ENCODE measurements at regions of chr22 and their contacts with region 1.

Region 1: GRCh38 chr22:38681784-38682335 is at the start of gene TOMM22:
- DNase-seq: peak; percentile 53
- ATAC-seq: peak; percentile 100
- H3K4me3 ChIP-seq: peak within 1 kb of the TSS; percentile 88
- H3K27ac ChIP-seq: peak within 1 kb of the TSS; percentile 81
- H3K4me1 ChIP-seq: no peaks in the 10 kb centered on the region; the same call in 1 of the 2 replicates
- H3K27me3 ChIP-seq: no peaks in the 10 kb centered on the region
- CTCF ChIP-seq: peak; percentile 77 to 92 (median 81)
- EP300 ChIP-seq: no peak
- POLR2A ChIP-seq: peak; percentile 99
- RAD21 ChIP-seq: no peak
- polyA plus RNA-seq, gene TOMM22: 37.6 to 62.2 TPM

Region 2: DNA sequence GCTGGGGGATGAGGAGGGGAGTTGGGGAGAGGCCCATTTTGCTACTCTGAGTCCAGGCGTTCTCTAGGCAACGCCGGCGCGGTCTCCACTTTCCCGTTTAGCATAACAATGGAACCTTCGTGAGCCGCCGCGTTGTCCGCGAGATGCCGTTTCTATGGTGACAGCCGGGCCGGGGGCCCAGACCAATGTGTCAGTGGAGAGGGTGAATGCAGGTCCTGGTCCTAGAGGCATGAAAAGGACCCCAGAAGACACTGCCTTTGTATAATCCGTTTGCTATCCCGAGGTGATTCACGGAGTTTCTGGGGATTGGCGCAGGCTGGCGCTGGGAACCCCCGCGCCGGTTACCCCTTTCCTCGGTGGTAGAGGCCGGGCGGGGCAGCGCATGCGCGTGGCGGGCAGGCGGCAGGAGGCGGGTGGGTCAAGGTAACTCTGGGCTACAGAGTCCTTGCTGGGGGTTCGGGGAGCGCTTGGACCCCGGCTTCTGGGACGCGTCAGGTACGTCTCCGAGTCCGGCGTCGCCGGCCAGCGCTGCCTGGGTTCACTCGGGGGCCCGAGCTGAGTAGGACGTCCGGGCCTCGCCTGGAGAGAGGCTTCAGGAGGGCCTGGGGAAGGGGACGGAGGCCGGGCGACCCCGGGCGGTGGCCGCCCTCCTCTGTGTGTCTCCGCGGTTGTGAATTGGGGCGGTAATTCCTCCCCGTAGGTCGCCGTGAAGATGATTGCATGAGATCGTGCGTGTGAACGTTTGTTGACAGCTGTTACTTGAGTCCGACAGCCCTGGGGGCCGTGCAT is 25.4 kb before region 1 on chr22 and contains the starts of genes CBY1 and FAM227A:
- CTCF ChIA-PET with region 1: interaction called, 5 read pairs
- POLR2A ChIA-PET with region 1: interaction called, 3 read pairs
- RAD21 ChIA-PET with region 1: interaction called, 5 read pairs
- SMC1A ChIA-PET with region 1: interaction called, 8 read pairs
- in situ Hi-C with region 1: no loop called
- intact Hi-C with region 1: loop called (anchors 1 kb)
- DNase-seq: peak; percentile 41
- ATAC-seq: peak; percentile 90
- H3K4me3 ChIP-seq: peak within 1 kb of the TSS; percentile 86
- H3K27ac ChIP-seq: peak within 1 kb of the TSS; percentile 99
- H3K4me1 ChIP-seq: peaks cover 5% of the 10 kb centered on the region
- H3K27me3 ChIP-seq: no peaks in the 10 kb centered on the region
- CTCF ChIP-seq: no peak
- EP300 ChIP-seq: no peak
- POLR2A ChIP-seq: peak; percentile 80
- RAD21 ChIP-seq: no peak
- polyA plus RNA-seq, gene CBY1: 12.4 to 14.5 TPM
- polyA plus RNA-seq, gene FAM227A: 0.02 to 0.11 TPM

Region 3: GRCh38 chr22:38694049-38694448 is 12.2 kb after region 1 on chr22:
- CTCF ChIA-PET with region 1: interaction called, 45 read pairs
- POLR2A ChIA-PET with region 1: interaction called, 43 read pairs
- RAD21 ChIA-PET with region 1: interaction called, 12 read pairs
- SMC1A ChIA-PET with region 1: interaction called, 43 read pairs
- in situ Hi-C with region 1: no loop called
- intact Hi-C with region 1: no loop called
- DNase-seq: no peak
- ATAC-seq: peak; percentile 12
- H3K4me3 ChIP-seq: no peak overlapping the region
- H3K27ac ChIP-seq: no peak overlapping the region
- H3K4me1 ChIP-seq: peaks cover 4% of the 10 kb centered on the region
- H3K27me3 ChIP-seq: no peaks in the 10 kb centered on the region
- CTCF ChIP-seq: no peak
- EP300 ChIP-seq: no peak
- POLR2A ChIP-seq: no peak
- RAD21 ChIP-seq: no peak

Region 4: GRCh38 chr22:38700270-38700788 is 18.5 kb after region 1 on chr22:
- CTCF ChIA-PET with region 1: interaction called, 45 read pairs
- POLR2A ChIA-PET with region 1: interaction called, 43 read pairs
- RAD21 ChIA-PET with region 1: interaction called, 14 read pairs
- SMC1A ChIA-PET with region 1: interaction called, 43 read pairs
- in situ Hi-C with region 1: no loop called
- intact Hi-C with region 1: no loop called
- DNase-seq: no peak
- ATAC-seq: peak; percentile 32
- H3K4me3 ChIP-seq: peak overlapping the region; percentile 86
- H3K27ac ChIP-seq: peak overlapping the region; percentile 89
- H3K4me1 ChIP-seq: peaks cover 12% of the 10 kb centered on the region
- H3K27me3 ChIP-seq: no peaks in the 10 kb centered on the region
- CTCF ChIP-seq: no peak
- EP300 ChIP-seq: no peak
- POLR2A ChIP-seq: no peak
- RAD21 ChIP-seq: no peak

Region 5: GRCh38 chr22:38705235-38706100 is 23.6 kb after region 1 on chr22 and contains the start of gene GTPBP1:
- CTCF ChIA-PET with region 1: interaction called, 45 read pairs
- POLR2A ChIA-PET with region 1: interaction called, 43 read pairs
- RAD21 ChIA-PET with region 1: interaction called, 14 read pairs
- SMC1A ChIA-PET with region 1: interaction called, 43 read pairs
- in situ Hi-C with region 1: no loop called
- intact Hi-C with region 1: no loop called
- DNase-seq: peak; percentile 100
- ATAC-seq: peak; percentile 85
- H3K4me3 ChIP-seq: peak within 1 kb of the TSS; percentile 95
- H3K27ac ChIP-seq: peak within 1 kb of the TSS; percentile 85
- H3K4me1 ChIP-seq: peaks cover 25% of the 10 kb centered on the region
- H3K27me3 ChIP-seq: no peaks in the 10 kb centered on the region
- CTCF ChIP-seq: no peak
- EP300 ChIP-seq: peak in 1 of 2 experiments; percentile 18; a peak in 1 of 4 replicates
- POLR2A ChIP-seq: peak; percentile 79
- RAD21 ChIP-seq: no peak
- polyA plus RNA-seq, gene GTPBP1: 0.89 to 1.9 TPM

Region 6: DNA sequence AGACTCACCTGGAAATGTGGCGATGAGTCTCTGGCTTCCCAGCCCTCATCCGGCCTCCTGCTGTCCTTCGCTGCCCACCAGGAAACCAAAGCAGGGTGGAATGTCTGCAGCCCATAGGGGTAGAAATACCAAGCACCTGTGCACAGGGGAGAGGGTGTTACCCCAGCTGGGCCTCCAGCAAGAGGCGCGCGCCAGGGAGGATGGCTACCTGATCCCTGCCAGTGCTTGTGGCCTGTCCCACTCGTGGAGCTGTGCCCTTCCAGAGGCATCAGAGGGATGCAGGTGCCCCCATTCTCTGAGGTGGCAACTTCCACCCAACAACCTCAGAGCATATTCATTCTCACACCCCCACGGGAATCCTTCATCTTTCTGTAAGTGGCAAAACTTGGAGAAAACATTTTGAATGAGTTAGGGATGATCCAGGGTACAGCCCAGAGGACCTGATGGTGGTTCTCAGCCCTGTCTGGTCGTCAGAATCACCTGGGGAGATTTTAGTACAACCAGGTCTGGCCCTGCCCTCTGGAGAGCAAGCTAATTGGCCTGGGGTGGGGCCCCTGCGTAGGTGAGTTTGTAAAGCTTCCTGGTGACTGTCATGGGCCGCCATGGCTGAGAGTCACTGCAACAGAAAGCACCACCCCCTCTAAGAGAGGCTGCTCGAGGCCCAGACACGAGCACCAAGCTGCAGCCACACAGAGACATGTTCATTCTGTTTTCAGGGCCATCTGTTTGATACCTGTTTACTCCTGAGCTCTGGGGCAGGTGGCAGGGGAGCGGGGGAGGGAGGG is 64.0 kb after region 1 on chr22:
- CTCF ChIA-PET with region 1: no interaction called
- POLR2A ChIA-PET with region 1: interaction called, 14 read pairs
- RAD21 ChIA-PET with region 1: no interaction called
- SMC1A ChIA-PET with region 1: no interaction called
- in situ Hi-C with region 1: no loop called
- intact Hi-C with region 1: no loop called
- DNase-seq: no peak
- ATAC-seq: no peak
- H3K4me3 ChIP-seq: no peak overlapping the region
- H3K27ac ChIP-seq: no peak overlapping the region
- H3K4me1 ChIP-seq: peaks cover 3% of the 10 kb centered on the region
- H3K27me3 ChIP-seq: no peaks in the 10 kb centered on the region
- CTCF ChIP-seq: no peak
- EP300 ChIP-seq: no peak
- POLR2A ChIP-seq: no peak
- RAD21 ChIP-seq: no peak

Measured in GM12878 (cell line).